CD8-positive, alpha-beta T cell (primary cell): ENCODE measurements at regions of chrX and their contacts with region 1.

Region 1: GRCh38 chrX:152632445-152633097 is 5.1 kb upstream of the GABRQ start:
- DNase-seq: peak in 4 of 9 experiments; percentile 6 to 31 (median 12)
- ATAC-seq: no peak
- H3K4me3 ChIP-seq: no peak overlapping the region
- H3K4me3 Mint-ChIP-seq: no peak overlapping the region
- H3K27ac ChIP-seq: no peak overlapping the region
- H3K27ac Mint-ChIP-seq: no peak overlapping the region
- H3K4me1 ChIP-seq: no peaks in the 10 kb centered on the region
- H3K4me1 Mint-ChIP-seq: no peaks in the 10 kb centered on the region
- H3K27me3 ChIP-seq: no peaks in the 10 kb centered on the region
- H3K27me3 Mint-ChIP-seq: peaks cover 14% of the 10 kb centered on the region
- CTCF ChIP-seq: peak; percentile 56

Region 2: DNA sequence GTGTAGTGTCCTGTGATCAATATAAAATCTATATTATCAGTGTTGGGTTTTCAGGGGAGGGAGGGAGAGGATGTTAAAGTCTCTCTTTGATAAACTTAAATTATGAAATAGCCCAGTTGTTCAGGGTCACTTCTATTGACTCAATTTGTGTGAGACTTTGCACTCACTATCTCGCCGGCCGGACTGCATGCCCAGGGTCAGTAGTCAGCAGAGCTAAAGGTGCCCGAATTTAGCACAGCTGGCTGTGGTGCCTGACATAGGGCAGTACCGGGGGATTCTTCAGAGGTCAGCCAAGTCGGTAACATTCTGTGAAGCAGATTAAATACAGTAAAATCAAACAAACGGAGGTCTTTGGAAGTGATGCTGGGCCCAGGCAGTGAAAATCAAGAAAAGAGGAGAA is 24.3 kb after region 1 on chrX:
- CTCF ChIA-PET with region 1: no interaction called
- POLR2A ChIA-PET with region 1: no interaction called
- intact Hi-C with region 1: loop called in 1 of 2 experiments (anchors 1 kb)
- DNase-seq: no peak
- ATAC-seq: no peak
- H3K4me3 ChIP-seq: no peak overlapping the region
- H3K4me3 Mint-ChIP-seq: no peak overlapping the region
- H3K27ac ChIP-seq: no peak overlapping the region
- H3K27ac Mint-ChIP-seq: no peak overlapping the region
- H3K4me1 ChIP-seq: no peaks in the 10 kb centered on the region
- H3K4me1 Mint-ChIP-seq: no peaks in the 10 kb centered on the region
- H3K27me3 ChIP-seq: no peaks in the 10 kb centered on the region
- H3K27me3 Mint-ChIP-seq: peaks cover 9% of the 10 kb centered on the region
- CTCF ChIP-seq: no peak